ENCODE measurements at regions of chr11 and their contacts with region 1.

Region 1: GRCh38 chr11:65117216-65118096 is at the start of gene ZNHIT2:
- DNase-seq: peak; percentile 100
- H3K4me3 Mint-ChIP-seq: peak within 1 kb of the TSS; percentile 90
- H3K27ac Mint-ChIP-seq: peak within 1 kb of the TSS; percentile 93
- H3K4me1 Mint-ChIP-seq: peaks cover 52% of the 10 kb centered on the region
- H3K27me3 Mint-ChIP-seq: no peaks in the 10 kb centered on the region
- total RNA-seq, gene ZNHIT2: 20.8 and 22.1 TPM in 2 replicates

Region 2: GRCh38 chr11:64810271-64810890 is 307.1 kb before region 1 on chr11 and contains the start of gene MEN1:
- intact Hi-C with region 1: loop called (anchors 1 kb)
- DNase-seq: peak; percentile 67
- H3K4me3 Mint-ChIP-seq: peak within 1 kb of the TSS; percentile 95
- H3K27ac Mint-ChIP-seq: peak within 1 kb of the TSS; percentile 89
- H3K4me1 Mint-ChIP-seq: peaks cover 22% of the 10 kb centered on the region
- H3K27me3 Mint-ChIP-seq: peaks cover 5% of the 10 kb centered on the region
- total RNA-seq, gene MEN1: 39.6 and 43.8 TPM in 2 replicates

Region 3: GRCh38 chr11:64878494-64879243 is 238.8 kb before region 1 on chr11 and contains the start of gene EHD1:
- intact Hi-C with region 1: loop called (anchors 1 kb)
- DNase-seq: peak; percentile 99
- H3K4me3 Mint-ChIP-seq: peak within 1 kb of the TSS; percentile 99
- H3K27ac Mint-ChIP-seq: peak within 1 kb of the TSS; percentile 83
- H3K4me1 Mint-ChIP-seq: peaks cover 64% of the 10 kb centered on the region
- H3K27me3 Mint-ChIP-seq: no peaks in the 10 kb centered on the region
- total RNA-seq, gene EHD1: 88.0 and 96.9 TPM in 2 replicates

Region 4: GRCh38 chr11:65040847-65041621 is 76.4 kb before region 1 on chr11 and contains the start of gene SAC3D1:
- intact Hi-C with region 1: loop called (anchors 1 kb)
- DNase-seq: peak; percentile 90
- H3K4me3 Mint-ChIP-seq: peak within 1 kb of the TSS; percentile 90
- H3K27ac Mint-ChIP-seq: peak within 1 kb of the TSS; percentile 93
- H3K4me1 Mint-ChIP-seq: peaks cover 19% of the 10 kb centered on the region
- H3K27me3 Mint-ChIP-seq: no peaks in the 10 kb centered on the region
- total RNA-seq, gene SAC3D1: 17.4 and 17.7 TPM in 2 replicates

Region 5: DNA sequence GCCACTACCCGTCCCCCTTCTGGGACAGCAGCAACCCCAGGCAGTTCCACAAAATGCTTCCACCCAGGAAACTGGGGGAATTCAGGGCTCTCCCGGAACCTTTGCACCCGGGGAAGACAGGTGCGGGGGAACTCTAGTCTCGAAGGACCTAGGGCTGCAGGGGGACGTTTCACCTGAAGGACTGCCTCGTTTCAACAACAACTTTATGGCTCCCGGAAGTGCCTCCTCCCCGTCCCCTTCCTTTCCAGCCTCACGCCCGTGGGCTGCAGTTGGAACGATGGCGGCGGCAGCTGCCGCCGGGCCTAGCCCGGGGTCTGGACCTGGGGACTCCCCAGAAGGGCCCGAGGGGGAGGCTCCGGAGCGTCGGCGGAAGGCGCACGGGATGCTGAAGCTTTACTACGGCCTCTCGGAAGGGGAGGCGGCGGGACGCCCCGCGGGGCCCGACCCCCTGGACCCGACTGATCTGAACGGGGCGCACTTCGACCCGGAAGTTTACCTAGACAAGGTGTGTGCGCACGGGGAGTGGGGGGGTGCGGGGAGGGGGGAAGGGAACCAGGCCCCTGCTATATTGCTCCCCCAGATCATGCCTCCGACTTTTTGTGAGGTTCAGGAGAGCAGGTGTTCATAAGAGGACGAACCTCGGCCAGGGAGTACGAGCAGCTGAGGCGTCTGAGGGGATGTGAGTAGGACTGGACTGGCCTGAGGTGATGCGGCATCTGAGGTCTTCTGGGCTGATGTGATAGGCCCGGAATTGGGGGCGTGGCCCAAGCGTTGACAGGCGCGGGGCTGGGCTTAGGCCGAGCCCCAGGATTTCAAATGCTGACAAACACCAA is 21.3 kb before region 1 on chr11 and contains the start of gene VPS51:
- intact Hi-C with region 1: loop called (anchors 1 kb)
- DNase-seq: peak; percentile 80
- H3K4me3 Mint-ChIP-seq: peak within 1 kb of the TSS; percentile 91
- H3K27ac Mint-ChIP-seq: peak within 1 kb of the TSS; percentile 94
- H3K4me1 Mint-ChIP-seq: peaks cover 11% of the 10 kb centered on the region
- H3K27me3 Mint-ChIP-seq: no peaks in the 10 kb centered on the region
- total RNA-seq, gene VPS51: 137 and 139 TPM in 2 replicates

Region 6: DNA sequence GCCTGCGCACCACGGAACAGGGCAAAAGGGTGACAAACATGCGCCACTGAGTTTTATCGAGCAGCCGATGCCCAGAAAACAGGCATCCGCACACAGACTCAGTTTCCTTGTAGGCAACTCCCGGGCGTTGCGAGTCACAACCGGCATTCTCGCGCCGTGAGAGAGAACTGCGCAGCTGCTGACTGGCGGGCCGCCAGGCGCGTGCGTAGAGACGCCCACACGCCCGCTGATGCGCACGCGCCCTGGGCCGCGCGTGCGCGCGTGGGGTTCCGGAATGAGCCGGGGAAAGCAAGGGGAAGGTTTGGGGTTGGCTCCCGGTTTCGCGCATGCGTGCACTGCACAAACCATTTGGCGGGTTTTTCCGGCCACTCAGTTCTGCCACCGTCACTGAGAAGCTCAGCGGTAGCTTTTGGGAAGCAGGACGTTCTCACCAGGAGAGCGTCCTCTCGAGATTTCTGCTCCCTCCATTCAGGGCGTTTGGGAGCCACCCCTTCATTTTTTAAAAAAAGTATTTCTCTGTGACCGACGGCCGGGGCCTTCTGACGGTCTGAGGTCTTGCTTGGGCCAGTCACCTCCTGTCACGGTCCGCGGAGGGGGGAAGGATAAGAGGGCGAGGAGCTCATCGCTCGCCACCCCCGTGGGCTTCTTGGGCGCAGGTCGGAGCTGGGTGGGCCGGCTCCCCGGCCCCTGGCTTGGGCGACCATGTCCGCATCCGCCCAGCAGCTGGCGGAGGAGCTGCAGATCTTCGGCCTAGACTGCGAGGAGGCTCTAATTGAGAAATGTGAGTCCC is 144.3 kb after region 1 on chr11 and contains the start of gene POLA2:
- intact Hi-C with region 1: loop called (anchors 5 kb)
- DNase-seq: peak; percentile 97
- H3K4me3 Mint-ChIP-seq: peak within 1 kb of the TSS; percentile 94
- H3K27ac Mint-ChIP-seq: peak within 1 kb of the TSS; percentile 97
- H3K4me1 Mint-ChIP-seq: peaks cover 47% of the 10 kb centered on the region
- H3K27me3 Mint-ChIP-seq: no peaks in the 10 kb centered on the region
- total RNA-seq, gene POLA2: 78.2 and 78.9 TPM in 2 replicates

Region 7: GRCh38 chr11:65672186-65672860 is 554.9 kb after region 1 on chr11:
- intact Hi-C with region 1: no loop called
- DNase-seq: no peak
- H3K4me3 Mint-ChIP-seq: no peak overlapping the region
- H3K27ac Mint-ChIP-seq: no peak overlapping the region
- H3K4me1 Mint-ChIP-seq: no peaks in the 10 kb centered on the region
- H3K27me3 Mint-ChIP-seq: no peaks in the 10 kb centered on the region